ENCODE measurements at regions of chr6 and their contacts with region 1.

Region 1: GRCh38 chr6:113306552-113307145 is 550.5 kb upstream of the MARCKS start:
- DNase-seq: peak; percentile 59
- ATAC-seq: peak; percentile 68
- H3K4me3 Mint-ChIP-seq: no peak overlapping the region
- H3K27ac Mint-ChIP-seq: no peak overlapping the region
- H3K4me1 Mint-ChIP-seq: no peaks in the 10 kb centered on the region
- H3K27me3 Mint-ChIP-seq: no peaks in the 10 kb centered on the region

Region 2: GRCh38 chr6:113858480-113859348 is 552.1 kb after region 1 on chr6:
- CTCF ChIA-PET with region 1: interaction called, 14 read pairs
- POLR2A ChIA-PET with region 1: no interaction called
- DNase-seq: peak; percentile 80
- ATAC-seq: peak; percentile 96
- H3K4me3 Mint-ChIP-seq: peak overlapping the region; percentile 18
- H3K27ac Mint-ChIP-seq: no peak overlapping the region
- H3K4me1 Mint-ChIP-seq: peaks cover 18% of the 10 kb centered on the region
- H3K27me3 Mint-ChIP-seq: peaks cover 30% of the 10 kb centered on the region

Measured in activated CD8-positive, alpha-beta T cell treated with anti-CD3 and anti-CD28 coated beads, Interleukin-2, amount 10 ng/mL, durations not matched to agents 7 days and 5 days (primary cell).